ENCODE measurements at regions of chr4 and their contacts with region 1.

Region 1: DNA sequence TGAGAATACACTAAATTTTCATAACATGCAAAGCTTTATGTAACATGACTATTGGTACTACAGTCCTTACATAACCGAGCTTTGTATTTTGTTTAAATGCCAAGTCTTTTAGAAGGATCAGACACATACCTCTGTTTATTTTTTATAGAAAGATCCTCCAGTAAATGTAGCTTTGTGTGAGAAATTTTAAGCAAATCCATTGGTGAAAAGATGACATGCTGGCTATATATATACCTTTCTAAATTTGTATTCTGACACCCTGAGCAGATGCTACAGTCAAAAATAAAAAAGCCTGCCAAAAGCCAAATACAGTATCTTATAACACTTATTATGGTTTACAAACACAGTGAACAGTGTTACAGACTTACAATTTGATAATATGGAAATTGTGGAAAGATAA is at the start of gene YIPF7:
- DNase-seq: no peak
- H3K4me3 ChIP-seq: no peak within 1 kb of the TSS
- H3K27ac ChIP-seq: no peak within 1 kb of the TSS
- H3K4me1 ChIP-seq: no peaks in the 10 kb centered on the region
- H3K27me3 ChIP-seq: no peaks in the 10 kb centered on the region
- CTCF ChIP-seq: no peak
- EP300 ChIP-seq: no peak
- POLR2A ChIP-seq: no peak
- total RNA-seq, gene YIPF7: not detected

Region 2: DNA sequence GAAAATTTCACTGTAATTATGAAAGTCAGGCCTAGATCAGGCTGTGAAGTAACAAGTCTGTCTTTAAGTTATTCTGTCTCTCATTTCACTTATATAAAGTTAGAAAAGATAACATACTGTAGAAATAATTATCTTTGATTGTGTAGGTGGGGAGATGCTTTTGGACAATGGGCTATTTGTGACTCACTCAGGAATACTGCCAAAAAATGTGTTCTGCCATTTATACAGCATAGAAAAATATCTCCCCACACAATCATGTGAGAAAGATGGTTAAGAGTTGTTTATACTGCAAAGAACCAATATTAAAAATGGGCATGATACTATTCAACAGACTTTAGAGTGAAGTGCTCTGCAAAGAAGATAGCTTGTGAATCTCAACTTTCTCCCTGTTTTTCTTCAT is 1833.5 kb after region 1 on chr4:
- in situ Hi-C with region 1: no loop called
- intact Hi-C with region 1: loop called (anchors 5 kb)
- DNase-seq: no peak
- H3K4me3 ChIP-seq: no peak overlapping the region
- H3K27ac ChIP-seq: no peak overlapping the region
- H3K4me1 ChIP-seq: no peaks in the 10 kb centered on the region
- H3K27me3 ChIP-seq: no peaks in the 10 kb centered on the region
- CTCF ChIP-seq: no peak
- EP300 ChIP-seq: no peak
- POLR2A ChIP-seq: no peak

Measured in transverse colon (tissue), 4 donors.